ENCODE measurements at regions of chr1 and their contacts with region 1.

Region 1: DNA sequence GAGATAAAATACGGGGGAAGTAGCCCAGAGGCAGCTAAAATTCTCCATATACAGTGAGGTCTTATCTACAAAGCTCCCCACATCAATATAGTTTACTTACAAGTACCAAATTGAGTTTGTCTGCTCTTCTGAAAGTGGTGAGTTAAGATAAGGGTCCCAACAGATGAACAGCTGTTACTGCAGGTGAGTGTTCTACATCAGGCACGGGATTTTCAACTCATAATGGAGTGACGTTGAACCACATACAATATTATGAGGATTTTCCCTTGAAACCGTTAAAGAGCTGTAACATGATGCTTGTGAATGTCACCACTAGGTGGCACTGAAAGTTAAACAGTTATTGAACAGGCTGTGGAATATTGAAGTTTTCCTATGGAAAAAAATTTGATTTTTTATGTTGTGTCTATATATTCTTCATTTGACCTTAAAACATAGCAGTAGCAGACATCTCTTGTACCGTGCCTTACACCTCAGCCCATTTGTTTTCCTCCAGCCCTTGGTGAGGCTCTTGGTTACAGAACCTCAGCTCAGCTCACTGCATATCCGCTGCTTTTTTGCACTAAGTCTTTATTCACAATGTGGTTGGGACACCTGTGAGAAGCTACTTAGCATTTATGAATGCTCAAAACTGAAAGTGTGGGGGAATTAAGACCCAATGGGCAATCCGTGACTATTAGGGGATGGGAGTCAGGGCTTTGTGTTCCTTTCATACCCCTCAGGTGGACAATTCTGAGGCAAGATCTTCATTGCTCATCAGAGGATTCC is 23.2 kb downstream of the CD1D start:
- DNase-seq: no peak
- ATAC-seq: peak; percentile 69
- H3K4me3 Mint-ChIP-seq: peak overlapping the region; percentile 49
- H3K27ac Mint-ChIP-seq: peak overlapping the region; percentile 41
- H3K4me1 Mint-ChIP-seq: peaks cover 23% of the 10 kb centered on the region
- H3K27me3 Mint-ChIP-seq: no peaks in the 10 kb centered on the region
- CTCF ChIP-seq: no peak

Region 2: GRCh38 chr1:158177700-158178450 is 26.0 kb before region 1 on chr1:
- CTCF ChIA-PET with region 1: interaction called, 41 read pairs
- POLR2A ChIA-PET with region 1: interaction called, 6 read pairs
- intact Hi-C with region 1: loop called (anchors 2 kb)
- DNase-seq: peak; percentile 70
- ATAC-seq: peak; percentile 77
- H3K4me3 Mint-ChIP-seq: peak overlapping the region; percentile 78
- H3K27ac Mint-ChIP-seq: peak overlapping the region; percentile 81
- H3K4me1 Mint-ChIP-seq: peaks cover 80% of the 10 kb centered on the region
- H3K27me3 Mint-ChIP-seq: no peaks in the 10 kb centered on the region
- CTCF ChIP-seq: no peak

Region 3: GRCh38 chr1:158248118-158248517 is 44.2 kb after region 1 on chr1:
- CTCF ChIA-PET with region 1: interaction called, 12 read pairs
- POLR2A ChIA-PET with region 1: no interaction called
- intact Hi-C with region 1: loop called (anchors 5 kb)
- DNase-seq: peak; percentile 32
- ATAC-seq: peak; percentile 83
- H3K4me3 Mint-ChIP-seq: peak overlapping the region; percentile 26
- H3K27ac Mint-ChIP-seq: peak overlapping the region; percentile 59
- H3K4me1 Mint-ChIP-seq: peaks cover 51% of the 10 kb centered on the region
- H3K27me3 Mint-ChIP-seq: no peaks in the 10 kb centered on the region
- CTCF ChIP-seq: no peak

Region 4: GRCh38 chr1:158324395-158324794 is 120.5 kb after region 1 on chr1:
- CTCF ChIA-PET with region 1: interaction called, 232 read pairs
- POLR2A ChIA-PET with region 1: interaction called, 8 read pairs
- intact Hi-C with region 1: loop called (anchors 1 kb)
- DNase-seq: no peak
- ATAC-seq: no peak
- H3K4me3 Mint-ChIP-seq: peak overlapping the region; percentile 41
- H3K27ac Mint-ChIP-seq: peak overlapping the region; percentile 59
- H3K4me1 Mint-ChIP-seq: peaks cover 26% of the 10 kb centered on the region
- H3K27me3 Mint-ChIP-seq: no peaks in the 10 kb centered on the region
- CTCF ChIP-seq: no peak

Region 5: DNA sequence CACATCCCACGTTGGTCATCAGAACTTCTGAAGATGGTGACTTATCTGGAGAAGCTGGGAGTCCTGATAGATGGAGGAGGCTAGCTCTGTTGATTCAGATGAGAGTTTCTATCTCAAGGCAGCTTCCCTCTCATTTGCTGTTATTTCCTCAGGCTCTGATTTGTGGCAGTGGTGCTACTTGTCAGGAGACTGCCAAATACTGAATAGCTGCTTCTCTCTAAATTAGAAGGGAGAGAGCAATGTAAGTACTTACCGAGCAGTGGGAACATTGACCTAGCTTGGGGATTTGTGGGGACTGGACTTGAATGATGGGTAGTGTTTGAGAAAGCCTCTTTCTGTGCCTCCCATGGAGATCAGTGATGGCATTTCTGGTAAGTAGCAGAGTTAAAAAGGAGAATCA is 257.7 kb after region 1 on chr1 and contains the start of gene OR10K1:
- CTCF ChIA-PET with region 1: no interaction called
- POLR2A ChIA-PET with region 1: no interaction called
- intact Hi-C with region 1: no loop called
- DNase-seq: no peak
- ATAC-seq: no peak
- H3K4me3 Mint-ChIP-seq: no peak within 1 kb of the TSS
- H3K27ac Mint-ChIP-seq: no peak within 1 kb of the TSS
- H3K4me1 Mint-ChIP-seq: no peaks in the 10 kb centered on the region
- H3K27me3 Mint-ChIP-seq: peaks cover 1% of the 10 kb centered on the region
- CTCF ChIP-seq: no peak
- total RNA-seq, gene OR10K1: not detected in 2 replicates

Region 6: GRCh38 chr1:158527190-158527815 is 323.4 kb after region 1 on chr1:
- CTCF ChIA-PET with region 1: interaction called, 18 read pairs
- POLR2A ChIA-PET with region 1: no interaction called
- intact Hi-C with region 1: loop called (anchors 1 kb)
- DNase-seq: no peak
- ATAC-seq: peak; percentile 34
- H3K4me3 Mint-ChIP-seq: no peak overlapping the region
- H3K27ac Mint-ChIP-seq: no peak overlapping the region
- H3K4me1 Mint-ChIP-seq: no peaks in the 10 kb centered on the region
- H3K27me3 Mint-ChIP-seq: peaks cover 34% of the 10 kb centered on the region
- CTCF ChIP-seq: no peak

Measured in activated B cell treated with CpG ODN at 0.5 μM for 24 hours (primary cell).